ENCODE measurements at regions of chr17 and their contacts with region 1.

Region 1: GRCh38 chr17:29533976-29534375 is 32.9 kb downstream of the ABHD15 start:
- DNase-seq: no peak
- H3K4me3 ChIP-seq: no peak overlapping the region
- H3K27ac ChIP-seq: no peak overlapping the region
- H3K4me1 ChIP-seq: no peaks in the 10 kb centered on the region
- H3K27me3 ChIP-seq: no peaks in the 10 kb centered on the region
- CTCF ChIP-seq: no peak

Region 2: DNA sequence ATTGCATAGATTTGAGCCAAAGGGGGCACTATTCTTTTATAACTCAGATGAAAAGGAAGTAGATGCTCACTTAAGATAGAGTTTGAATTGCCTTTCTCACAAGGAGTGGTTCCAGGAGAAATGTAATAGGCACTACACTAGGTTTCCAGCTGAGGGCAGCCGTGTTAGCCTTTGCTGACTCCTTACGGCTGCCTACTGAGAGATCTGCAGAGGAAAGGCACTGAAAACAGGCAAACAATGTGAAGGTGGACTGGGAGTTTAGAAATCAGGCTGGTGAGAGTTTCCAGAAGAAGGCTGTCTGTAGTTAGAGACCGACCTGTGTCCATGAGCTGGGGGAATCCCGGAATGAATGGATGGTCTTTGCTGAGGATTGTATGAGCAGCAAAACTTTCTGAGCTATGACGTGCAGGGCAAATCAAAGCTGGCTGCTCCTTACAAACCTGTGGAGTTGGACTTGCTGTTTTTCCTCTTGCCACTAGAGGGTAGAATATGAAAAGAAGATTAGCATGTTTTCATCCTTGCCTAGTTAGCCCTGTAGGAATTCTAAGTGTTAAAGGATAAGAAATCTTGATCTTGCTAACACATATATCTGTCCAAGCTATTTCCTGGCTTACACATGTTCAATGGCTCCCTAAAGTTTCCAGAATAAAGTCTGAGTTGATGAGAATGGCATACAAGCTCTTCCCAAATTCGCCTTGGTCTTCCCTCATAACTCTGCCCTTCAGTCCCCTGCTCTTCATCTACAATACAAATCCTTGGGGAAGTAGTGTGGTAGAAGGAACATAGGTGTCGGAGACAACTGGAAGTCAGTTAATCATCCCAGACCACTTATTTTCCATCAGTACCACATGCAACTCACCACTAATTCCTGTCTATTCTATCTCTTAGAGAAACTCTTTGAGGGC is 163.9 kb before region 1 on chr17:
- intact Hi-C with region 1: loop called (anchors 1 kb)
- DNase-seq: peak in 1 of 2 donors; percentile 78
- H3K4me3 ChIP-seq: peak overlapping the region in 1 of 2 donors; percentile 43
- H3K27ac ChIP-seq: peak overlapping the region in 1 of 2 donors; percentile 17
- H3K4me1 ChIP-seq: no peaks in the 10 kb centered on the region
- H3K27me3 ChIP-seq: no peaks in the 10 kb centered on the region
- CTCF ChIP-seq: peak; percentile 57 to 67 (median 62)

Region 3: DNA sequence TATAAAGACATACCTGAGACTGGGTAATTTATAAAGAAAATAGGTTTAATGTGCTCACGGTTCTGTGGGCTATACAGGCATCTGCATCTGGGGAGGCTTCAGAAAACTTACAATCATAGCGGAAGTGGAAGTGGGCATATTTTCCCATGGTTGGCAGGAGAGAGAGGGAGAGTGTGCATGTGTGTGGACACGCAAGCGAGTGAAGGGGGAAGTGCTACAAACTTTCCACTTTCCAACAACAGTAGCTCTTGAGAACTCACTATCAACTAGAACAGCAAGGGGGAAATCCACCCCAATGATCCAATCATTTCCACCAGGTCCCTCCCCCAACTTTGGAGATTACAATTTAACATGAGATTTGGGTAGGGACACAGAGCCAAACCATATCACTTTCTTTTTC is 132.7 kb before region 1 on chr17:
- intact Hi-C with region 1: no loop called
- DNase-seq: no peak
- H3K4me3 ChIP-seq: no peak overlapping the region
- H3K27ac ChIP-seq: no peak overlapping the region
- H3K4me1 ChIP-seq: no peaks in the 10 kb centered on the region
- H3K27me3 ChIP-seq: no peaks in the 10 kb centered on the region
- CTCF ChIP-seq: no peak

Region 4: DNA sequence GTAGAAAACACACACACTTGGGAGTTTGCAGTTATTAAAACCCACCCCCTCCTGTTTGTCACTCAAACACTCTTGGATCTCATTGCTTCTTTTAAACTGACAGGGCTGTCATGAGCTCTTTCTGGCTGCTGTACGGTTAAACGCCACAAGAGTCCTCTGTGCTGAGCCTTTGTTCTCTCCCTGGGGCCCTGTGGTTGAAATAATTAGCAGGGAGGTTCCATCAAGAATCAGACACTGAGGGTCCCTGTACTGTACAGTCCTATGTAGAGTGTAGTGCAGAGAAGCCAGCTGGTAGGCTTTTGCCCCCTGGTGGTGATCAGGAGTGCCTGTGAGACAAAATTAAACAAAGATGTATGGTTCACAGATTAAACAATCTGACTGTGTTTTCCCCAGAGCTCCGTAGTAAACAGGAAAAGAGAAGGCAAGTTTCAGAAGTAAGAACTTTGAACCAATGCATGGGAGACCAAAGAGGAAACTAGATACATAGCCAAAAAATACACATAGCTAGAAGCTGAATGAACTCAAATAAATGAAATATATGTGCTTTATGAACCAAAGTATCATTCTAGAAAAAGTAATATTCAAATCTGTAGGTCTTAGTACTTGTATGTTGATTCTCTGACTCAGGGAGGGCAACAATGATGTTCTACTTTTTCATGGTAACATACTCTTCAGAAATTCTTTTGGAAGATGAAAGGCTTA is 397.4 kb after region 1 on chr17:
- intact Hi-C with region 1: no loop called
- DNase-seq: peak in 1 of 2 donors; percentile 74
- H3K4me3 ChIP-seq: peak overlapping the region; percentile 87 to 99
- H3K27ac ChIP-seq: no peak overlapping the region
- H3K4me1 ChIP-seq: peaks cover 0 to 7% of the 10 kb centered on the region in 2 donors
- H3K27me3 ChIP-seq: no peaks in the 10 kb centered on the region
- CTCF ChIP-seq: peak; percentile 74 to 87 (median 81)

Measured in ascending aorta (tissue), 2 donors.